ENCODE measurements at regions of chr12 and their contacts with region 1.

Region 1: GRCh38 chr12:124567661-124568373 is 405 bp upstream of the NCOR2 start:
- DNase-seq: peak; percentile 97

Region 2: DNA sequence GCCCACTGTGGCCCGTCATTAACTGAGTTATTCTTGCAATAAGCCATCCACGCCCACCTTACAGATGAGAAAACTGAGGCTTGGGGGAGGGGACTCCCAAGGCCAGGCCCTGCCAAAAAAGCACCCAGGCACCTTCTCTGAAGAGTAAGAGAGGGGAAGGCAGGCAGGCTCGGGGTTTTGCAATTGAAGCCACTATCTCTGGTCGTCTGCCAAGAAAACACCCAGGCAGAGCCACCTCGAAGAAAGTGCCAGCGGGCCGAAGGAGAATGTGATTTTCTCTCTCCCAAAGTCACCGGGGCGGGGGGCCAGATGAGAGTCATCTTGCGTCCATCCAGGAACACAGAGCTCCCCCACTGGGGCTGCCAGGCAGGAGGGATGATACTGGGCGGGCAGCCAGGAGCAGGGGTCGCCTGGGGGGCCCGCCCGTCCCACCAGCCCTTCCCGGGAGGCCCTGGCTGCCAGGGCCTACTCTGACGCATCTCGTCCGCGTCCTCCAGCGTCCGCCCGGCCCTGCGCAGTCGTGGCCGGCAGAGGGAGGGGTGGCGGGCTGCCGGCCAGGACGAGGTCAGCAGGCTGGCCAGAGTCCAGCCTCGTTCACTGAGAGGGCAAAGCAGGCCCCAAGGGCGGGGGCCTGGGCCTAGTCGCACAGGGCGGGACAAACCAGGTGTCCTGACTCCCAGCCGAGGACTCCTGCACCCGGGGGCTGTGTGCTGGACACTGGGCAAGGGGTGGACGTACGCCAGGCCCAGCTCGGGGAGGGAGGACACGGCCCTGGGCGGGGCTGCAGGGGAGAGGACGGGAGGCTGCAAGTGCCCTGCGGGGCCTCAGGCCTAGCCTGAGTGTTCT is 198.5 kb before region 1 on chr12:
- intact Hi-C with region 1: loop called (anchors 5 kb)
- DNase-seq: peak; percentile 93

Region 3: DNA sequence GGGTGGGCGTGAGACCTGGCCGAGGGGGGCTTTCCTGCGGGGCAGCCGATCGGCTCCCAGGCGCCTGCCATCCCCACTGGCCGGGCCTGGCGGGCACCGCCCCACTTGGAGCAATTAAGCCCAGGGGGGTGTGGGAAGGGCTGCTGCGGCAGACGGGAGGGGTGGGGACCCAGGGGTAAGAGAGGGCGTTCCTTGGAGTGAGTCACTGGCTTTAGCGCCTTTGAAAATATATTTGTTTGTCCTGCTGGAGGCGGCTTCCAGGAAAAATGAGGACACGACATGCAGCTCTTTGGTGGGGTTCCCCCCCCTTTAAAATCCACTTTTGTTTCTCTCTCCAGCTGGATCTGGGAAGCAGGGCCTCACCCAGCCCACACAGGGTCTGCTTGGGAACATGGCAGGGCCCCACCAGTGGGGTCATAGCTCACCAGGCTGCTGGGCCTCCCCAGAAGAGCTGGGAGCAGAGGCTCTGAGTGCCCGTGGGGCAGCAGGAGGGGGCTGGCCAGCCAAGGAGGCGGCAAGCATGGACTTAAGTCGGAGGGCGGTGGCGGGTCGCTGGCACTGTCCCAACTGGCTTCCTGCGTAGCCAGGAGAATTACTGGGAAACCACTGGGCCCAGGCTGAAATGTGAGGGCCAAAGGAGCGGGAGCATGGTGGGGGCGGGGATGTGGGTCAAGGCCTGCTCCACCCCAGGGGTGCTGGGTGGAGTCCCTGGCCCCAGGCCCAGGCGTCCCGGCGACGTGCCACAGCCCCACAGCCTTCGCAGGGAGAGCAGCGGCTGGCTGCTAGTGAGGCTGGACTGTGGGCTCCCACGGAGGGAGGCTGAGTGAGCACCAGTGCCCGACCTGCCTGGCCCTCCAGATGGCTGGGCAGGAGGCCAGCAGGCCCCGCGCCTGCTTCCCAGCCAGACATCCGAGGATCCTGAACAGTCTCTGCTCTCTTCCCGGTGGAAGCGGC is 145.0 kb before region 1 on chr12:
- intact Hi-C with region 1: loop called (anchors 5 kb)
- DNase-seq: peak; percentile 93

Region 4: GRCh38 chr12:124518051-124518932 is 49.5 kb before region 1 on chr12:
- intact Hi-C with region 1: loop called (anchors 2 kb)
- DNase-seq: peak; percentile 97

Region 5: DNA sequence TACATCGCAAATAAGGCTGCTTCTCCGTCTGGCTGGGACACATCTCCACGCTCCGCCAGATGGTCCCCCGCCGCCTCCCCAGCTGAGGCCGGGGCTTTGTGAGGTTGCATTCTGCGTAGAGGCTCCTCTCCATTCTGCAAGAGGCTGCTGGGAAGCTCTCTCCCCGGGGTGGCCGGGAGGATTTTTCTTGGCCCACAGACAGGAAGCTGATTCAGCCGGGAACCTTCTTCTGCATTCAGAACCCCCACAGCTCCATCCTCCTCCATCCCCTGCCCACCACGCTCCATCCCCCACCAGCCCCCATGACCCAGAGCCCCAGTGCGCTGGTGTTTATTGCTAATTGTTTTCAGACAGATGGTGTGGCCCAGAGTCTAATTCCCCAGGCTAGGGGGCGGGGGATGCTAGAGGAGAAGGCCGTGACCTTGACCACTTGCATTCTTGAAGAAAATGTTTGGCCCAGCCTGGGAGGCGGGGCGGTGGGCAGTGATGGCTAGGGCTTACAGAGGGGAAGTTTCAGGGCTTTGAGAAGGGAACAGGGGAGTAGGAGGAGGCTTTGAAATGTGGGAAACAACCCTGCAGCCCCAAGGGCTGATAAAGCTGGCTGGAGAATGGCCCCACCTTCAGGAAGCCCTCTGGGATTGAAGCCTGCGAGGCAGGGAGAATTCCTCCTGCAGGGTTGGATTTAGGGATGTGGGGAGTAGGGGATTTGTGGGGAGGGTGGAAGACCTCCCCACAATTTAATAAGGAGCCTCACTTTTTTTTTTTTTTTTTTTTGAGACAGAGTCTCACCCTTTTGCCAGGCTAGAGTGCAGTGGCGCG is 88.1 kb after region 1 on chr12:
- intact Hi-C with region 1: loop called (anchors 2 kb)
- DNase-seq: peak; percentile 89

Region 6: GRCh38 chr12:124745891-124746570 is 178.2 kb after region 1 on chr12:
- intact Hi-C with region 1: loop called (anchors 5 kb)
- DNase-seq: peak; percentile 95